ENCODE measurements at regions of chr6 and their contacts with region 1.

Region 1: DNA sequence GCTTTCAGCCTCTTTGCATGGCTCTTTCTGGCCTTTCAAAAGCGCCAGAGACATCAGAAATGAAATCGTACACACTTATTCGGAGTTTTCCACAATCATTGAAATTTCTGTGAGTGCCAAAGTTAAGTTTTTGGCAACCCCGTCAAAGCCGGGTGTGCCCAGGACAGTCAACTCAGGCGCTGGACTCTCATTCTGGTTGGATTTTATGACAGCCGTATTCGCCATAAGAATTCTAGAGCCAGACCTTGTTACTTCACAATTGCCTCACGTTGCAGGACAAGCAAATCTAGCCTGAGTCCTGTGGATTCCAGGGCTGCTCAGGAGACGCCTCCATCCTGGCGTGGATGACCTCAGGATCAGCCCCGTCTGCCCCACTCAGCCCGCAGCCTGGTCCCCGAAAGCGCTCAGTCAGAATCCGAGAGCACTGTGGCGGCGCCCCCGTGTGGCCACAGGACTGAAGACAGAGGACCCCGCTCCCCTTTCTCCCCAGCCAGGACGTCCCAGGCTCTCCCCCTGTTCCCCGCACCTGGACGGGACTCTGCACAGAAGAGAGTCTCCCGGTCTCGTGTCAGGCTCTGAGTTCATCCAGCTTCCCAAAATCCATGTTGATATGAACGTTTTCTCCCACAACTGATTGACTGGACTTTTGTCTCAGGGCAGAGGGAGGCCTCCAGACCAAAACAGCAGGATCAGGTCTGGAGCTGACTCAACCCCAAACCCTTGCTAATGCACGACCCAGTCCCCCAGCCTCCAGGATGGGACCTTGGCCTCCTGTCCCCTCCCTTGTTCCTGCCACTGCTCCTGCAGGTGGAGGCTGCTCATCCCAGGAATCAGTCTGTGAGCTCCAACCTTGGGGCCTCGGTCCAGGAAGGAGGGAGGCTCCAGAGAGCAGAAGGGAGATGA is 38.2 kb downstream of the MICA start:
- DNase-seq: peak; percentile 81
- ATAC-seq: peak; percentile 98
- H3K4me3 Mint-ChIP-seq: no peak overlapping the region
- H3K27ac Mint-ChIP-seq: no peak overlapping the region
- H3K4me1 Mint-ChIP-seq: peaks cover 16% of the 10 kb centered on the region
- H3K27me3 Mint-ChIP-seq: peaks cover 24% of the 10 kb centered on the region
- CTCF ChIP-seq: peak; percentile 59

Region 2: DNA sequence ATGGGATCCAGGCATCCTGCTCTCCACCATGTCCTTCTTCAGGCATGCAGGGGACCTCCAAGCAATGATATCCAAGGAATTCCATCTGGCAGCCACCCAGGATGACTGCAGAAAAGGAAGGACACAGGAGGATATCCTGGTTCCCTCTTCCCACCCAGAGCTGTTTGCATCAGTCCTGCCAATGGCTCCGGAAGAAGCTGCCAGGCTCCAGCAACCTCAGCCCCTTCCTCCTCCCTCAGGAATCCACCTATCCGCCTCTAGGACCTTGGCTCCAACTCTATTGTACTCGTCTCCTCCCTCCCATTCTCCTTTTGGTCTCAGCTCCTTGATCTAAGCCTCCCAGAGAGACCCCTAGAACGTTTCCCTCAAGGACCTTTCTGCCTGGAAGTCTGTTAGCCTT is 302.0 kb before region 1 on chr6:
- CTCF ChIA-PET with region 1: no interaction called
- POLR2A ChIA-PET with region 1: no interaction called
- intact Hi-C with region 1: loop called (anchors 2 kb)
- DNase-seq: no peak
- ATAC-seq: no peak
- H3K4me3 Mint-ChIP-seq: no peak overlapping the region
- H3K27ac Mint-ChIP-seq: no peak overlapping the region
- H3K4me1 Mint-ChIP-seq: peaks cover 7% of the 10 kb centered on the region
- H3K27me3 Mint-ChIP-seq: no peaks in the 10 kb centered on the region
- CTCF ChIP-seq: no peak

Region 3: DNA sequence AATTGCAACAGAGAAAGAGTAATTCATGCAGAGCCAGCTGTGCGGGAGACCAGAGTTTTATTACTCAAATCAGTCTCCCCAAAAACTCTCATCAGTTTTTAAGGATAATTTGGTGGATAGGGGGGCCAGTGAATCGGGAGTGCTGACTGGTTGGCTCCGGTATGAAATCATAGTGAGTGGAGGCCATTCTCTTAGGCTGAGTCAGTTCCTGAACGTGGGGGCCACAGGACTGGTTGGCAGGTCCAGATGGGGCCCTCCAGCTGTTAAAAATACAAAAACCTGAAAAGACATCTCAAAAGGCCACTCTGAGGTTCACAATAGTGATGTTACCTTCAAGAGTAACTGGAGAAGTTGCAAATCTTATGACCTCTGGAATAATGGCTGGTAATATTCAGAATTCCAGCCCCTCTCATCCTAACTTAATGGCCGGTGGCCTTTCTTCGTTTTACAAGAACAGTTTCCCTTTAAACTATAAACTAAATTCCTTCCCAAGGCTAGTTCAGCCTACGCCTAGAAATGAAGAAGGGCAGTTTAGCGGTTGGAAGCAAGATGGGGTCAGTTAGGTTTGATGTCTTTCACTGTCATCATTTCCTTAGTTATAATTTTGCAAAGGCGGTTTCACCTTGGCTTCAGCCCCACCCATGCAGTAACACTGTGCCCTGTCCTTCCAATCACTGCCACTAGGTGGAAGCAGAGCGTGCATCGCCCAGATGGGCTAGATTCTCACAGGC is 45.0 kb before region 1 on chr6:
- CTCF ChIA-PET with region 1: interaction called, 22 read pairs
- POLR2A ChIA-PET with region 1: interaction called, 25 read pairs
- intact Hi-C with region 1: loop called (anchors 1 kb)
- DNase-seq: peak; percentile 76
- ATAC-seq: peak; percentile 71
- H3K4me3 Mint-ChIP-seq: peak overlapping the region; percentile 57
- H3K27ac Mint-ChIP-seq: no peak overlapping the region
- H3K4me1 Mint-ChIP-seq: peaks cover 24% of the 10 kb centered on the region
- H3K27me3 Mint-ChIP-seq: no peaks in the 10 kb centered on the region
- CTCF ChIP-seq: no peak

Region 4: GRCh38 chr6:31403283-31403989 is 38.2 kb before region 1 on chr6 and contains the start of gene MICA:
- CTCF ChIA-PET with region 1: interaction called, 22 read pairs
- POLR2A ChIA-PET with region 1: interaction called, 25 read pairs
- intact Hi-C with region 1: no loop called
- DNase-seq: peak; percentile 63
- ATAC-seq: peak; percentile 65
- H3K4me3 Mint-ChIP-seq: peak within 1 kb of the TSS; percentile 91
- H3K27ac Mint-ChIP-seq: peak within 1 kb of the TSS; percentile 80
- H3K4me1 Mint-ChIP-seq: peaks cover 63% of the 10 kb centered on the region
- H3K27me3 Mint-ChIP-seq: no peaks in the 10 kb centered on the region
- CTCF ChIP-seq: no peak
- total RNA-seq, gene MICA: 8.9 and 9.0 TPM in 2 replicates

Measured in activated B cell treated with CpG ODN at 0.5 μM for 24 hours (primary cell).